Psoas muscle (tissue), 8 donors: ENCODE measurements at regions of chr16 and their contacts with region 1.

Region 1: DNA sequence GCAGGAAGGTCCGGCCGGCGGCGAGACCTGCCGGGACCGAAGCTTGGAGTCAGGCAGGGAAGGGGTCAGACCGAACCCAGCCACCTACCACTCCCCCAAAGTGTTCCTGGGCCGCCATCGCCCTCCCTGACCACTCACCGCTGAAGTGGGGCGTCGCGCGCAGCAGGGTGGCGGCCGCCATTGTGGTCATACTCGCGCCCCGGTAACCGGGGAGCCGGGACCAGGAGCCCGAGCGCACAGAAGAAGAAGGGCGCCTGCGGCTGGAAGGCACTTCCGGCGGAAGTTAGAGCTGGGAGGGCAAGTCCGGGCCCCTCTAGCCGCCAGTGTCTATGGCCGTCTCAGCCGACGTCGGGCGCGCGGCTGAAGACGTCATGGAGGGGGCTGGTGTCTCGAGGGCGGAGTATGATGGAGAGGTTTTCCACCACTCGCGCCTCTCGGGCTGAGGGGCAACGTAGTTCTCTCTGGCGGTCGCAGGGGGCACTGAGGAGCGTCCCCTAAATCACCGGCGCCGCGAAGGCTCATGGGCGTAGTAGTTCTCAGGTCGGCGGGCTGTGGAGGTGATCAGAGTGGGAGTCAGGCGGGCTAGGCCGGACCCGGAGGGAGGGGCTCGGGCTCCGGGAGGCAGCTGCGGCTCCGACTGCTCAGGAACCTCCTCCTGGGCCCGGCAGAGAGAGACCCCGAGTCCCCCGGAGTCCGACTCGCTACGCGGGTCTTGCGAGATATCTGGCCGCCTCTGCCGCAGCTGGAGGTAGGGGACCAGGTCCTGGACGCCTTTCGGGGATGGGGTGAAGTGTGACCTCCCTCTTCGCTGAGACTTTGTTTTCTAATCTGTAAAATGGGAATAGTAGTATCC is at the start of gene TUFM:
- DNase-seq: peak; percentile 98 to 99
- ATAC-seq: peak; percentile 95 to 97 (median 96)
- H3K4me3 ChIP-seq: peak within 1 kb of the TSS; percentile 95
- H3K27ac ChIP-seq: peak within 1 kb of the TSS; percentile 89
- H3K4me1 ChIP-seq: peaks cover 19% of the 10 kb centered on the region
- H3K27me3 ChIP-seq: no peaks in the 10 kb centered on the region
- CTCF ChIP-seq: peak; percentile 66
- total RNA-seq, gene TUFM: 155 to 233 (median 187) TPM

Region 2: DNA sequence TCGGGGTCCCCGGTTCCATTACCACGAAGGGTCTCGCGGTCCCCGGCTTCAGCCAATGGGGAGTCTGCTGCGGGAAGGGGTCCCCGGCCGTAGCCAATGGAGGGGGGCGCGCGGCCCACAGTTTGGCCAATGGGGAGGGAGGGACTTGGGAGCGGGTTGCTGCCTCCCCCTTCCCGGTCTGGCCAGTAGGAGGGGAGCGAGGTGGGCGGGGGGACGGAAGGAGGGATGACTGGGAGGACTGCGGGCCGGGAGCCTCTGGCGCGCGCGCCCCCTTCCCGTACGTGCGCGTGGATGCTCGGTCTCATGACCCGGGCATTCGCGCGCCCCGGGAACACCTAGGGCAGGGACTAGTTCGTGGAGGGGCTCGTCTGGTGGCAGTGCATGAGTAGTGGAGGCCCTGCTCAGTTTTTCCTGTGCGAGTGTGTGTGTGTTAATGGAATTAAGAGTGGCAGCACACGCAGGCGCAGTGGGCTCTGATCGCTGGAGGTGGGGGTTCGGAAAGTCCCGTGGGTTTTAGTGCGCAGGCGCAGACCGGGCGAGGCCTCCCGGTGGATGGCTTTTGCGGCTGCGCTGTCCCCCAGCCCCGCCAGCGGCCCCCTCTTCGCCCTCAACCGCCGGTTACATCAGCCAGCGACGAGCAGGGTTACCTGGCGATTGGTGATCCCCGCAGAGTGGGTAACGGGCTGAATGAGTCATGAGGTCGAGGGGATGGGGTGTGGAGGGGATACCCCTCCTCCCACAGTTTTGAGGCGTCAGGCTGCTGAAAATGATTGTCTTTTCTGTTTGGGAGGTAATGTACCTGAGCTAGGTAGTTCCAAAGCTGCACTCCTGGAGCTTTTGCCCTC is 22.2 kb before region 1 on chr16:
- intact Hi-C with region 1: loop called (anchors 1 to 2 kb)
- DNase-seq: peak; percentile 98 to 99
- ATAC-seq: peak; percentile 91 to 92 (median 91)
- H3K4me3 ChIP-seq: peak overlapping the region; percentile 84
- H3K27ac ChIP-seq: peak overlapping the region; percentile 93
- H3K4me1 ChIP-seq: peaks cover 19% of the 10 kb centered on the region
- H3K27me3 ChIP-seq: no peaks in the 10 kb centered on the region
- CTCF ChIP-seq: no peak

Region 3: DNA sequence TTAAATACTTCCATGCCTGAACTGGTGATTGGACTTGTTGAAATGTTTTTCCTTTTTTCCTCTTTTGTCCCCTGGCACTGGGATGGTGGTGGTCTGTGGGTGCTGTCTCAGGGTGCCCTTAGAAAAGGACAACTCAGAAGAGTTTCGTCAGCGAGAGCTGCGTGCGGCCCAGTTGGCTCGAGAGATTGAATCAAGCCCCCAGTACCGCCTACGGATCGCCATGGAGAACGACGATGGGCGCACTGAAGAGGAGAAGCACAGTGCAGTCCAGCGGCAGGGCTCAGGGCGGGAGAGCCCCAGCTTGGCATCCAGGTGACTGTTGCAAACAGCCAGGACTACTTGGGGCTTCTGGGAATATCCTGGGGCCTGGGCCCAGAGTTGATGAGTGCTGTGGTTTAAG is 16.6 kb before region 1 on chr16:
- intact Hi-C with region 1: loop called (anchors 2 kb)
- DNase-seq: no peak
- ATAC-seq: no peak
- H3K4me3 ChIP-seq: no peak overlapping the region
- H3K27ac ChIP-seq: no peak overlapping the region
- H3K4me1 ChIP-seq: peaks cover 16% of the 10 kb centered on the region
- H3K27me3 ChIP-seq: no peaks in the 10 kb centered on the region
- CTCF ChIP-seq: no peak

Region 4: DNA sequence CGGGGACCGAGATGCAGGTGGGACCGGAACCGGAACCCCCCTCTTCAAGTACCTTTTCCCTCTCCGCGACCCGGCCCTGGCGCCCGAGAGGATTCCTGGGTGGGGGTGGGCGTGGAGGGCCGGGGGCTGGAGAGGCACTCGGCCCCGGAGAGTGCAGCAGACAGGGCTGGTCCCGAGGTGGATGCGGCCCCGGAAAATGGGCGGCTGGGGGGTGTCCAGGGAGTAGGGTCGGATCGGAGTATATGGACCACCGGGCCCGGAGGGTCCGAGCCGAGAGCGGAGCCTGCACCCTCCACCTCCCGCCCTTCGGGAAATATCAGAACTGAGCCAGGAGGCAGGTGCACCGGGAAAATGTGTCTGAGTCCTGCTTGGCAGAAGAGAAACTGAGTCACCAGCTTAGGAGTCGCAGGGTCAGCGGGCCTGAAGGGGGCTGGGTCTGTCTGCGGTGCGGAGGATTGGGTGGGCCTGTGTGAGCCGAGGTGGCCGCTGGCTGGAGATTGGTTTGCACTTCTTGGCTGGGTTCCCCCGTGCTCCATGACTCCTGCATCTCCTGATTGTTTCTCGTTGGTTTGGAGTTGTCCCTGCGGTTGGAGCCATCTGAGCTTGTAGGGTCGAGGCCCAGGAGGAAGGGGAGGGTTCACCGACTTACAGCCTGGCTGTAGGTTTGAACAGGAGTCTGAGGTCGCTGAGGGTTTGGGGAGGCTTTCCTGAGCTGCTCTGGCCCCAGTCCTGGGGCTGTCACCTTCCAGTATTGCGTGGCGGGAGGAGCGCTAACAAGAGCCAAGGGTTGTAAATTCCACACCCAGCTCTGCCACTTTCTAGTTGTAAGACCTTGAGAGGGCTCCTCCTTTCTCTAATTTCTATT is 17.9 kb after region 1 on chr16:
- intact Hi-C with region 1: loop called in 1 of 2 experiments (anchors 1 kb)
- DNase-seq: peak in 1 of 2 donors; percentile 33
- ATAC-seq: peak; percentile 18 to 43 (median 22)
- H3K4me3 ChIP-seq: peak overlapping the region; percentile 95
- H3K27ac ChIP-seq: peak overlapping the region; percentile 98
- H3K4me1 ChIP-seq: peaks cover 10% of the 10 kb centered on the region
- H3K27me3 ChIP-seq: no peaks in the 10 kb centered on the region
- CTCF ChIP-seq: no peak